ENCODE measurements at regions of chr1 and their contacts with region 1.

Region 1: DNA sequence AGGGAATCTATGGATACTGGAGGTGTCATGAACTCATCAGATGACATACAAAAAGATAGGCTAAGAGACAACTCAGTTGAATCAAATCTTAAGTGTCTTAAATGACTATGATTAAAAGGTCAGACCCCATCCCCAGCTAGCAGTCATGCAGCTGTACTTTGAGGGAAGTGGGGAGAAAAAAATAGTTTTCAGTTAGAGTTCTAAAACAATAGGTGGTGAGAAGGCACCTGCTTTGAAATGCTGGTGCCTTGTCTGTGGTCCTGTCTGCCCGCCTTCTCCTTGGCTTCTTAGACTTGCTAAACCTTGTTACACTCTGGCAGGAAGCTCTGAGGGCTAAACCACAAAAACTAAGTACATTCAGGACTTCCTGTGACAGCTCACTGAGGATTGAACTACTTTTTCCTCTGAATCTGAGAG is 15.3 kb downstream of the CD2 start:
- DNase-seq: peak; percentile 91
- ATAC-seq: peak; percentile 55
- H3K4me3 Mint-ChIP-seq: peak overlapping the region; percentile 58
- H3K27ac Mint-ChIP-seq: peak overlapping the region; percentile 97
- H3K4me1 Mint-ChIP-seq: peaks cover 85% of the 10 kb centered on the region
- H3K27me3 Mint-ChIP-seq: no peaks in the 10 kb centered on the region

Region 2: GRCh38 chr1:116711263-116711840 is 58.2 kb before region 1 on chr1:
- CTCF ChIA-PET with region 1: no interaction called
- DNase-seq: no peak
- ATAC-seq: no peak
- H3K4me3 Mint-ChIP-seq: no peak overlapping the region
- H3K27ac Mint-ChIP-seq: no peak overlapping the region
- H3K4me1 Mint-ChIP-seq: peaks cover 3% of the 10 kb centered on the region
- H3K27me3 Mint-ChIP-seq: peaks cover 4% of the 10 kb centered on the region

Region 3: GRCh38 chr1:116754198-116754977 is 15.2 kb before region 1 on chr1 and contains the start of gene CD2:
- CTCF ChIA-PET with region 1: interaction called, 47 read pairs
- DNase-seq: peak; percentile 82
- ATAC-seq: peak; percentile 79
- H3K4me3 Mint-ChIP-seq: peak within 1 kb of the TSS; percentile 97
- H3K27ac Mint-ChIP-seq: peak within 1 kb of the TSS; percentile 98
- H3K4me1 Mint-ChIP-seq: peaks cover 37% of the 10 kb centered on the region
- H3K27me3 Mint-ChIP-seq: no peaks in the 10 kb centered on the region
- total RNA-seq, gene CD2: 278 to 444 TPM

Region 4: DNA sequence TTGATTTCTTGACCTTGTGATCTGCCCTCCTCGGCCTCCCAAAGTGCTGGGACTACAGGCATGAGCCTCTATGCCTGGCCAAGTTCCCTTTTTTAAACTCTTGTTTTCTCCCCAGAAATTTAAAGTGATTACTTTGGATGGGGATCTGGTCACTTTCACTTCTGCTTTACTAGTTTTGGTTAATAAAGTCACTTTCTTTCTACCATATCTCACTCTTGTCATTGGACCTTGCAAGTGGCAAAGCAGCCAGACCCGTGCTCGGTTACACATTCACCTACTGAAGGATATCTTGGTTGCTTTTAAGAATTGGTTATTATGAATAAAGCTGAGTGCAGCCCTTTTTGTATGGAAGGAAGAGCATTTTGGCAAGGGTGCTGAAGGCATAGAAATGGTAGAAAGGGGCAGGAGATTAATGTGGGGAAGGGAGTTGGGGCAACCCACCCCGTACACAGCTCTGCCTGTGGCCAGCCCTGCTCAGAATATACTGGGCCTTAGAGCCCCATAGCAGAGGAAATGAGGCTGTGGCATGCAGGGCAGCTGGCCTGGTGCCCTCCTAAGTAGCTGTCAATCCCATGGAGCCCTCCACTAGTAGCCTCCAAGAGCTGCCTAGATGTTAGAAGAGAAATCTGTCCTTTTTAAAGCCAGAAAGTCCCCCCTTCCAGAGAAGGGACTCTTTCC is 25.4 kb after region 1 on chr1:
- CTCF ChIA-PET with region 1: interaction called, 224 read pairs
- DNase-seq: no peak
- ATAC-seq: no peak
- H3K4me3 Mint-ChIP-seq: no peak overlapping the region
- H3K27ac Mint-ChIP-seq: peak overlapping the region; percentile 47
- H3K4me1 Mint-ChIP-seq: peaks cover 75% of the 10 kb centered on the region
- H3K27me3 Mint-ChIP-seq: no peaks in the 10 kb centered on the region

Region 5: GRCh38 chr1:116847688-116848531 is 78.3 kb after region 1 on chr1:
- CTCF ChIA-PET with region 1: no interaction called
- DNase-seq: peak; percentile 45
- ATAC-seq: peak; percentile 97
- H3K4me3 Mint-ChIP-seq: no peak overlapping the region
- H3K27ac Mint-ChIP-seq: no peak overlapping the region
- H3K4me1 Mint-ChIP-seq: peaks cover 19% of the 10 kb centered on the region
- H3K27me3 Mint-ChIP-seq: no peaks in the 10 kb centered on the region

Measured in activated CD8-positive, alpha-beta memory T cell treated with anti-CD3 and anti-CD28 coated beads, Interleukin-2, amount 10 ng/mL, durations not matched to agents 7 days and 5 days (primary cell).